Activated CD8-positive, alpha-beta T cell treated with anti-CD3 and anti-CD28 coated beads for 36 hours (primary cell): ENCODE measurements at regions of chrX and their contacts with region 1.

Region 1: DNA sequence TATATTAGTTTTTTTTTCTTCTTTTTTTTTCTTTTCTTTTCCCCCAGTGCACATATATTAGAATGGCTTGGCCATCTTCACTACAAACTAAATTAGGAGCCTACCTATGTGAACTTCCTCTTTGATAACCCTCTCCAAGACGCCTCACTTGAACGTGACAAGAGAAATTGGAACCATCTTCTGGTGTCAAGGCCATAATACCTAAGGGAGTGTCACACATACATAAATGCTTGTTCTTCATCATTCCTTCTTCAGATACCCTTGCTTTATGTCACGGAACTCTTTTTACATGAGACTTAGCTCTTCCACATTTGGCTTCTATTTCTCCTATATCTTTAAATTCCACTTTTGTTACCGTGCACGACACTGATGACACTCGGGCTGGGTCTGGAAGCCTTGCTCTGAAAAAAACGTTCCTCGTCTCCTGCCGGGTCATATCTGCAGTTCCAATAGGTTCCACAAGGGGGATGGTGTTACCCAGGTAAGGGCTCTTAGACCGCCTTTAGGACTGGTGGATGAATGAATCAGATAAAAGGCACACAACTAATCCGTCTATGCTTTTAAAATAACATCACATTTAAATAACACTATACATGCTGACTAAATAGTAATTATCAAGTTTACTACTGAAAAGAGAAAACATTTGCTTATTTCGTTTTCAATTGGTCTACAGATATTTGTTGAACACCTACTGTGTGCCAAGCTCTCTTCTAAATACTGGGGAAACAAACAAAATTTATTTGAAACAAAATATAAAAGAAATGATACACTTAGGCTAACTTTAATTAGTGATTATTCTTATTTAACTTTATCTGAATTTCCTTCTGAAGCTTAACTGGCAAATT is 19.9 kb downstream of the DGAT2L6 start:
- DNase-seq: peak; percentile 78
- ATAC-seq: peak; percentile 90
- H3K4me3 Mint-ChIP-seq: no peak overlapping the region
- H3K27ac Mint-ChIP-seq: no peak overlapping the region
- H3K4me1 Mint-ChIP-seq: peaks cover 2% of the 10 kb centered on the region
- H3K27me3 Mint-ChIP-seq: peaks cover 4% of the 10 kb centered on the region
- CTCF ChIP-seq: peak; percentile 56

Region 2: DNA sequence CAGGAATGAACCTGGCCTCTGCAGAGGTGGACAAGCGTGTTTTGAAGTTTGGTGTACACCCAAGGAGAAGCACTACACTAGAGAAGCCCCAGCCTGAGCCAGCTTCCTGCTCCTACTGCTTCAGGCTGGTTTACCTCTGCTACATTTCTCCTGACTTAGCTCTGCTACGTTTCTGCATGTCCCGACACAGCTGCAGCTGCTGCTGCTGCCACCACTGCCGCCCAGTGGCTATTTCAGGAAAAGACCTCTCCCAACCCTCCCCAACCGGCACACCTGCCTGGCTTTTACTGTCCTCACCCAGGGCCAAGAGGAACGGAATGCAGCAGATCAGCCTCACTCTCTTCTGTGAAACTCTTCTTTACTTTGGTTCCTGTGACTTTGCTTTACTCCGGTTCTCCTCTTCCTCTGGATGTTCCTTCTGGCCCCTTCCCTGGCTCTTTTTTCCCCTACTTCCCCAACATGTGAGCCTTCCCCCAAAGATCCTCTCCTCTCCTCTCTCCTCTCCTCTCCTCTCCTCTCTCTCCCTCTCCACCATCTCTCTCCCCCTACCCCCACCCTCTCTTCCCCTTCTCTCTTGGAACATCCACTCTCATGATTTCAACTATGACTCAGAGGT is 65.9 kb after region 1 on chrX:
- CTCF ChIA-PET with region 1: no interaction called
- POLR2A ChIA-PET with region 1: no interaction called
- intact Hi-C with region 1: loop called (anchors 5 kb)
- DNase-seq: peak; percentile 58
- ATAC-seq: peak; percentile 67
- H3K4me3 Mint-ChIP-seq: no peak overlapping the region
- H3K27ac Mint-ChIP-seq: no peak overlapping the region
- H3K4me1 Mint-ChIP-seq: no peaks in the 10 kb centered on the region
- H3K27me3 Mint-ChIP-seq: no peaks in the 10 kb centered on the region
- CTCF ChIP-seq: peak; percentile 14

Region 3: GRCh38 chrX:70281951-70282350 is 84.8 kb after region 1 on chrX and contains the start of gene RAB41:
- CTCF ChIA-PET with region 1: no interaction called
- POLR2A ChIA-PET with region 1: no interaction called
- intact Hi-C with region 1: no loop called
- DNase-seq: no peak
- ATAC-seq: no peak
- H3K4me3 Mint-ChIP-seq: no peak within 1 kb of the TSS
- H3K27ac Mint-ChIP-seq: no peak within 1 kb of the TSS
- H3K4me1 Mint-ChIP-seq: no peaks in the 10 kb centered on the region
- H3K27me3 Mint-ChIP-seq: no peaks in the 10 kb centered on the region
- CTCF ChIP-seq: no peak
- total RNA-seq, gene RAB41: not detected